ENCODE measurements at regions of chr1 and their contacts with region 1.

Region 1: DNA sequence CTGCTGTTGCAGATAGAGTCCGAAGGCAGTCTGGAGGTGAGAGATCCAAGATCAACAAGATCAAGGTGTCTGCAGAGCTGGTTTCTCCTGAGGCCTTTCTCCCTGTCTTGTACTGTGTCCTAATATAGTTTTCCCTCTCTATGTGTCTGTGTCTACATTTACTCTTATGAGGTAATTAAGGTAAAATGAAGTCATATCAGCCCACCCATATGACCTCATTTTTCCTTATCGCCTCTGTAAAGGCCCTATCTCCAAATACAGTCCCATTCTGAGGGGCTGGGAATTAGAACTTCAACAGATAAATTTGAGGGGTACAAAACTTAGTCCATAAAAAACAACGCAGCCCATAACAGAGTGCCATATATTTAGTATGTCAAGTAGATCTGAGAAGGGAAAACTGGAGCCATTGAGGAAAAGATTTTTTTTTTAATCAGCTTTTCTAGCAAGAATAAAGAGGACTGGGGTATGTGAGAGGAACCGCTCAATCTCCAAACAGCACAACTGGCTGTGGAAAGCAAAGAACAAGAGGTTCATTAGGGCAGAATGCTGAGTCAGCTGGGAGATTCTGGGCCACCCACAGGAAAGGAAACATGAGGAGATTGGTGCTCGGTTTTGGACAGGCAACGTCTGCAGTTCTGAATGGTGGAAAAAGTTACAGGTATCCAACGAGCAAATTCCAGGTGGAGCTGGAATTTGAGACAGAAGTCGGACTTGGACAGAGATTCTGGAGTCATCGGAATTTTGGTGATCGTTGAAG is 65.7 kb downstream of the MAP3K21 start:
- DNase-seq: no peak
- ATAC-seq: no peak
- H3K4me3 ChIP-seq: no peak overlapping the region
- H3K4me3 Mint-ChIP-seq: no peak overlapping the region
- H3K27ac ChIP-seq: no peak overlapping the region
- H3K27ac Mint-ChIP-seq: no peak overlapping the region
- H3K4me1 ChIP-seq: no peaks in the 10 kb centered on the region
- H3K4me1 Mint-ChIP-seq: no peaks in the 10 kb centered on the region
- H3K27me3 ChIP-seq: peaks cover 0 to 6% of the 10 kb centered on the region in 2 experiments
- H3K27me3 Mint-ChIP-seq: peaks cover 34 to 38% of the 10 kb centered on the region in 2 donors

Region 2: DNA sequence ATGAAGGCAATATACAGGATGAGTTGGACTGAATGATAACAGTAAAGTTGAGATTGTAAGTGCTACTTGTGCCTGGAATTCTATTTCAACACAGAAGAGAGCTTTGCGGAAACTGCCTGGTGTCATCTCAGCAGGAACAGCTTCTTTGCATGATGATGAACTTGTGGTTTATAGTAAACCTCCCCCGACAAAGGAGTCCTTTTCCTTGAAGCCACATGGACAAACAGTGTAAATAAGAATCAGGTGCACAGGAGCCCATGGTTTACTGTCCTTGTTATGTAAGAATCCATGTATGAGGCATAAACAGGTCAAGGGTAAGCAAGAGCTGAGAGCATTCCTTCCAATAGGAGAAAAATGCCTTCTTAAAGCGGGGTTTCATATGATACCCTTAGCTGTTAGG is 164.0 kb before region 1 on chr1:
- CTCF ChIA-PET with region 1: no interaction called
- POLR2A ChIA-PET with region 1: no interaction called
- DNase-seq: no peak
- ATAC-seq: no peak
- H3K4me3 ChIP-seq: no peak overlapping the region
- H3K4me3 Mint-ChIP-seq: no peak overlapping the region
- H3K27ac ChIP-seq: no peak overlapping the region
- H3K27ac Mint-ChIP-seq: no peak overlapping the region
- H3K4me1 ChIP-seq: no peaks in the 10 kb centered on the region
- H3K4me1 Mint-ChIP-seq: no peaks in the 10 kb centered on the region
- H3K27me3 ChIP-seq: no peaks in the 10 kb centered on the region
- H3K27me3 Mint-ChIP-seq: no peaks in the 10 kb centered on the region

Region 3: DNA sequence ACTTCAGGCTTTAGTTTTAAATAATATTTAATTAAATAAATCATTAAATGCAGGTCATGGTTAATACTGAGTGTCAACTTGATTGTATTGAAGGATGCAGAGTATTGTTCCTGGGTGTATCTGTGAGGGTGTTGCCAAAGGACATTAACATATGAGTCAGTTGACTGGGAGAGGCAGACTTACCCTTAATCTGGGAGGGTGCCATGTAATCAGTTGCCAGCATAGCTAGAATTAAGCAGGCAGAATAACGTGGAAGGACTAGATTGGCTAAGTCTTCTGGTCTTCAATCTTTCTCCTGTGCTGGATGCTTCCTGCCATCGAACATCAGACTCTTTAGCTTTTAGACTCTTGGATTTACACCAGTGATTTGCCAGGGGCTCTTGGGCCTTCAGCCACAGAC is 19.6 kb after region 1 on chr1:
- CTCF ChIA-PET with region 1: interaction called, 3 to 15 read pairs
- POLR2A ChIA-PET with region 1: interaction called in 1 of 2 experiments, 4 read pairs
- DNase-seq: no peak
- ATAC-seq: no peak
- H3K4me3 ChIP-seq: no peak overlapping the region
- H3K4me3 Mint-ChIP-seq: no peak overlapping the region
- H3K27ac ChIP-seq: no peak overlapping the region
- H3K27ac Mint-ChIP-seq: no peak overlapping the region
- H3K4me1 ChIP-seq: no peaks in the 10 kb centered on the region
- H3K4me1 Mint-ChIP-seq: no peaks in the 10 kb centered on the region
- H3K27me3 ChIP-seq: peaks cover 0 to 3% of the 10 kb centered on the region in 2 experiments
- H3K27me3 Mint-ChIP-seq: peaks cover 7 to 9% of the 10 kb centered on the region in 2 donors

Region 4: GRCh38 chr1:233679591-233680373 is 286.5 kb after region 1 on chr1:
- CTCF ChIA-PET with region 1: no interaction called
- POLR2A ChIA-PET with region 1: no interaction called
- DNase-seq: no peak
- ATAC-seq: no peak
- H3K4me3 ChIP-seq: no peak overlapping the region
- H3K4me3 Mint-ChIP-seq: no peak overlapping the region
- H3K27ac ChIP-seq: no peak overlapping the region
- H3K27ac Mint-ChIP-seq: no peak overlapping the region
- H3K4me1 ChIP-seq: no peaks in the 10 kb centered on the region
- H3K4me1 Mint-ChIP-seq: no peaks in the 10 kb centered on the region
- H3K27me3 ChIP-seq: peaks cover 0 to 3% of the 10 kb centered on the region in 2 experiments
- H3K27me3 Mint-ChIP-seq: peaks cover 0 to 5% of the 10 kb centered on the region in 2 donors